SK-N-SH (cell line): ENCODE measurements at regions of chr10 and their contacts with region 1.

Region 1: DNA sequence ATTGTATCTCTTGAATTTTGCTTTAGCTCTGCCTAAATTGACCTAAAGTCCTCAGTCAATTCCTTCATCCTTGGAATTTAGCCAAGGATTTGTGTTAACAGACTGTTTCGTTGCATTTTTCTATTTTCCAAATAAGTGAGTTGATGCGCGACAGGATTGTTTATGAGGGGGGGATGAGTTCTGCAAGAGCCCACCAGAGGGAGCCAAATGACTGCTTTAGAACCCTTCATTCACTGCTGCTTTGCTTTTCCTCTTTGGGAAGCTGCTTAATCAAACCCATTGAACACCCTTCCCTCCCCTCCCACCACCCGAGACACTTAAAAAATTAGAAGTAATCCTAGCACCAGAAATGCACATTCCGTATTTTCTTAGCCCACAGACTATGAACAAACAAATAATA is 33.7 kb upstream of the PTF1A start:
- DNase-seq: peak; percentile 85
- H3K4me3 ChIP-seq: peak overlapping the region; percentile 25 to 49; a peak in 3 of 4 replicates
- H3K27ac ChIP-seq: no peak overlapping the region
- H3K4me1 ChIP-seq: peaks cover 0 to 3% of the 10 kb centered on the region in 2 experiments; a peak in 1 of 4 replicates
- H3K27me3 ChIP-seq: peaks cover 7% of the 10 kb centered on the region; the same call in 1 of the 2 replicates
- CTCF ChIP-seq: peak; percentile 94
- EP300 ChIP-seq: no peak
- RAD21 ChIP-seq: peak; percentile 91

Region 2: GRCh38 chr10:23095404-23095965 is 62.9 kb before region 1 on chr10 and contains the start of gene MSRB2:
- CTCF ChIA-PET with region 1: interaction called, 10 read pairs
- POLR2A ChIA-PET with region 1: no interaction called
- DNase-seq: peak; percentile 96
- H3K4me3 ChIP-seq: peak within 1 kb of the TSS; percentile 79 to 90
- H3K27ac ChIP-seq: peak within 1 kb of the TSS; percentile 60 to 95
- H3K4me1 ChIP-seq: peaks cover 4 to 13% of the 10 kb centered on the region in 2 experiments; a peak in 3 of 4 replicates
- H3K27me3 ChIP-seq: no peaks in the 10 kb centered on the region
- CTCF ChIP-seq: no peak
- EP300 ChIP-seq: no peak
- RAD21 ChIP-seq: no peak
- polyA plus RNA-seq, gene MSRB2: 42.3 and 44.0 TPM in 2 replicates

Region 3: GRCh38 chr10:23146258-23146657 is 12.1 kb before region 1 on chr10:
- CTCF ChIA-PET with region 1: interaction called, 51 read pairs
- POLR2A ChIA-PET with region 1: no interaction called
- DNase-seq: no peak
- H3K4me3 ChIP-seq: no peak overlapping the region
- H3K27ac ChIP-seq: no peak overlapping the region
- H3K4me1 ChIP-seq: no peaks in the 10 kb centered on the region
- H3K27me3 ChIP-seq: no peaks in the 10 kb centered on the region
- CTCF ChIP-seq: no peak
- EP300 ChIP-seq: no peak
- RAD21 ChIP-seq: no peak

Region 4: GRCh38 chr10:23199768-23200511 is 41.6 kb after region 1 on chr10:
- CTCF ChIA-PET with region 1: interaction called, 17 read pairs
- POLR2A ChIA-PET with region 1: no interaction called
- DNase-seq: no peak
- H3K4me3 ChIP-seq: no peak overlapping the region
- H3K27ac ChIP-seq: no peak overlapping the region
- H3K4me1 ChIP-seq: no peaks in the 10 kb centered on the region; a peak in 1 of 4 replicates
- H3K27me3 ChIP-seq: peaks cover 38% of the 10 kb centered on the region
- CTCF ChIP-seq: no peak
- EP300 ChIP-seq: no peak
- RAD21 ChIP-seq: no peak

Region 5: GRCh38 chr10:23293145-23293724 is 134.9 kb after region 1 on chr10:
- CTCF ChIA-PET with region 1: interaction called, 208 read pairs
- POLR2A ChIA-PET with region 1: interaction called, 3 read pairs
- DNase-seq: peak; percentile 70
- H3K4me3 ChIP-seq: no peak overlapping the region
- H3K27ac ChIP-seq: no peak overlapping the region
- H3K4me1 ChIP-seq: no peaks in the 10 kb centered on the region; a peak in 1 of 4 replicates
- H3K27me3 ChIP-seq: no peaks in the 10 kb centered on the region
- CTCF ChIP-seq: peak; percentile 72
- EP300 ChIP-seq: no peak
- RAD21 ChIP-seq: peak; percentile 73

Region 6: DNA sequence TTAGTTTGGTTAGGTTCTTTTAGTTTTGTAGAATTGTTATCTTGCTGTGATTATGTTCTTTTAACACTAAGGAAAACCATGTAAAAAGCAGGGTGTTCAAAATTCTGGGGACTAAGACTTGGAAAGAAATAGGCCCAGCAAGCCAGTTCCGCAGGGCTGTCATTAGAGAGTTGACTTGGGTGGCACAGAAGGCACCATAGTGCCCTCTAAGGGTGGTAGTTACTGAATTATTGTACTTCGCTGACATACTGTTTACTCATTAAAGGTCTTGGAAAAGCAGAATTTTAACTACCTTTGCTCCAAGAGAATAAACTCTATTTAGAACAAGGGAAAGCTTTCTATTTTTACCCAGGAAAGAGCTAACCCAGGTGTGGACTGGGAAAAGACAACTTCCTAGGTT is 367.0 kb after region 1 on chr10:
- CTCF ChIA-PET with region 1: interaction called, 36 read pairs
- POLR2A ChIA-PET with region 1: no interaction called
- DNase-seq: peak; percentile 37
- H3K4me3 ChIP-seq: no peak overlapping the region
- H3K27ac ChIP-seq: no peak overlapping the region
- H3K4me1 ChIP-seq: no peaks in the 10 kb centered on the region
- H3K27me3 ChIP-seq: no peaks in the 10 kb centered on the region
- CTCF ChIP-seq: peak; percentile 54
- EP300 ChIP-seq: no peak
- RAD21 ChIP-seq: peak; percentile 84